MCF 10A (cell line): ENCODE measurements at regions of chr11 and their contacts with region 1.

Region 1: GRCh38 chr11:129861702-129862113 is 33.7 kb downstream of the NFRKB start:
- DNase-seq: peak; percentile 89
- H3K4me3 Mint-ChIP-seq: peak overlapping the region; percentile 62
- H3K27ac Mint-ChIP-seq: peak overlapping the region; percentile 86
- H3K4me1 Mint-ChIP-seq: peaks cover 13% of the 10 kb centered on the region
- H3K27me3 Mint-ChIP-seq: no peaks in the 10 kb centered on the region
- CTCF ChIP-seq: no peak

Region 2: DNA sequence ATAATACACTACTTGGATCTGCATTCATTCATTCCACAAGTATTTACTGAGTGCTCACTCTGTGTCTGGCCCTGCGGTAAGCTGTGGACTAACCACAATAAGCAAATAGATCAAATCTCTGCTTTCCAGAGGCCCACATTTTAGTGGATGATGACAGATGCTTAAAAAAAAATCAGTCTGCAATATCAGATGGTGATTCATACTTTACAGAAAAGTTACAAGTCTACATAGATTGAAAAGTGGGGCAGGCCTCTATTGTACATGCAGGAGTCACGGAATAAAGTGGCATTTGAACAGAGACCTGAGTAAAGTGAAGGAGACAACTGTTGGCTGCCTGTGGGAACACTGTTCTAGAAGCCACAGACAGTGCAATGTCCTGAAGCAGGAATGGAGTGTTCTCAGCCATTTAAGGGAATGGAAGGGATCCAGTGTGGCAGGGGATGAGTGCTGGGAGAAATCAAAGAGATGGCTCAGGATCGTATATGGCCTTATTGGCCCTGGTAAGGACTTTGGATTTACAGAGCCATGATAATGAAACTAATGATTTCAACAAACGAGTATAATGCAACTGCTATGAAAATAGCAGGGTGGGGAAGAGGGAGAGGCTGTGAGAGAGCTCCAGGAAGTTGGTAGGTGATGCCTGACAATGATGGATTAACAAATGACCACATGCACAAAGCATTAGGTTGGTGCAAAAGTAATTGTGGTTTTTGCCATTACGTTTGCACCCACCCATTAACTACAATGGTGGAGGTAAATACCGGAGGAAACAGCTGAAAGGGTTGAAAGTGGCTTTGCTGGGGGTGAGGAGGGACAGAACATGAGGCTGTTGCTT is 15.0 kb before region 1 on chr11:
- CTCF ChIA-PET with region 1: interaction called, 4 read pairs
- POLR2A ChIA-PET with region 1: interaction called, 25 read pairs
- intact Hi-C with region 1: no loop called
- DNase-seq: peak; percentile 80
- H3K4me3 Mint-ChIP-seq: peak overlapping the region; percentile 56
- H3K27ac Mint-ChIP-seq: peak overlapping the region; percentile 88
- H3K4me1 Mint-ChIP-seq: peaks cover 12% of the 10 kb centered on the region
- H3K27me3 Mint-ChIP-seq: no peaks in the 10 kb centered on the region
- CTCF ChIP-seq: no peak